Activated CD4-positive, alpha-beta T cell treated with anti-CD3 and anti-CD28 coated beads for 36 hours (primary cell): ENCODE measurements at regions of chr5 and their contacts with region 1.

Region 1: DNA sequence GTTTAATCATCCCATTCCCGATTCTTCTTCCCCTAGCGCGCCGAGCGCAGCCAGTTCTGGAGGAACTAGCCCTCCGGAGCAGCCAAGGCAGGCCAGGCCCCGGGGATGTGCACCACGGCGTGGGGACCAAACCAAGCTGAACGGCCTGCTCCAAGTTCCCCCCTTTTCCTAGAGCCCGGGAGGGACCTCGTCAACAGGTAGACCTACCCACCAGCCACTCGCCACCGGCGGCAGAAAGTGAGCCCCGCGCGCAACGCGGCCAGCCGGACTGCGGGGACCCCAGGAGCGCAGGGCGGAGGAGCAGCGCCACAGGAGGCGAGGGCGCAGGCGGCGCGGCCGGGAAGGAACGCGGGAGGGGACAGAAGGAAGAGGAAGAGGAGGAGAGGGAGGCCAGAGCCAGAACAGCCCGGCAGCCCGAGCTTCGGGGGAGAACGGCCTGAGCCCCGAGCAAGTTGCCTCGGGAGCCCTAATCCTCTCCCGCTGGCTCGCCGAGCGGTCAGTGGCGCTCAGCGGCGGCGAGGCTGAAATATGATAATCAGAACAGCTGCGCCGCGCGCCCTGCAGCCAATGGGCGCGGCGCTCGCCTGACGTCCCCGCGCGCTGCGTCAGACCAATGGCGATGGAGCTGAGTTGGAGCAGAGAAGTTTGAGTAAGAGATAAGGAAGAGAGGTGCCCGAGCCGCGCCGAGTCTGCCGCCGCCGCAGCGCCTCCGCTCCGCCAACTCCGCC is at the start of gene ISL1:
- DNase-seq: peak; percentile 42
- ATAC-seq: peak; percentile 44
- H3K4me3 Mint-ChIP-seq: peak within 1 kb of the TSS; percentile 26
- H3K27ac Mint-ChIP-seq: no peak within 1 kb of the TSS
- H3K4me1 Mint-ChIP-seq: peaks cover 5% of the 10 kb centered on the region
- H3K27me3 Mint-ChIP-seq: peaks cover 85% of the 10 kb centered on the region
- total RNA-seq, gene ISL1: not detected

Region 2: GRCh38 chr5:51397996-51398395 is 15.1 kb after region 1 on chr5:
- CTCF ChIA-PET with region 1: no interaction called
- POLR2A ChIA-PET with region 1: no interaction called
- intact Hi-C with region 1: loop called in 1 of 2 experiments (anchors 2 kb)
- DNase-seq: no peak
- ATAC-seq: no peak
- H3K4me3 Mint-ChIP-seq: no peak overlapping the region
- H3K27ac Mint-ChIP-seq: no peak overlapping the region
- H3K4me1 Mint-ChIP-seq: no peaks in the 10 kb centered on the region
- H3K27me3 Mint-ChIP-seq: peaks cover 56% of the 10 kb centered on the region

Region 3: DNA sequence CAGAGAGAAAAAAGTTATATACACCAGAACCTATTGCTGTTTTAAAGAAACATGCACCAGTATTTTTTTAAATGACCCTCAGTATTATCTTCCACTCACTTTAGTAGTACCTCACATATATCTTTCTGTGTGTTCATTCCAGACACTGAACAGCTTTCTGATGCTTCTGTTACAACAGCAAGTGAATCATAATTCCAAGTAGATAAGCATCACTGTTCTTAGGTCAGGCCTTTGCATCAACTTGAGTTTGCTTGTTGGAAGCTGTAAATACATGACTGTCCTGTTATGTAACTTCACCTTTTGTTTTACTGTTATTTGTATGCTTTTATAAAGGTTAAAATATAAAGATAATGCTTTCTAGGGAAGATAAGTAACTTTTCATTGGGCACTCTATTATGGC is 184.7 kb after region 1 on chr5:
- CTCF ChIA-PET with region 1: no interaction called
- POLR2A ChIA-PET with region 1: no interaction called
- intact Hi-C with region 1: no loop called
- DNase-seq: no peak
- ATAC-seq: no peak
- H3K4me3 Mint-ChIP-seq: no peak overlapping the region
- H3K27ac Mint-ChIP-seq: no peak overlapping the region
- H3K4me1 Mint-ChIP-seq: no peaks in the 10 kb centered on the region
- H3K27me3 Mint-ChIP-seq: no peaks in the 10 kb centered on the region

Region 4: DNA sequence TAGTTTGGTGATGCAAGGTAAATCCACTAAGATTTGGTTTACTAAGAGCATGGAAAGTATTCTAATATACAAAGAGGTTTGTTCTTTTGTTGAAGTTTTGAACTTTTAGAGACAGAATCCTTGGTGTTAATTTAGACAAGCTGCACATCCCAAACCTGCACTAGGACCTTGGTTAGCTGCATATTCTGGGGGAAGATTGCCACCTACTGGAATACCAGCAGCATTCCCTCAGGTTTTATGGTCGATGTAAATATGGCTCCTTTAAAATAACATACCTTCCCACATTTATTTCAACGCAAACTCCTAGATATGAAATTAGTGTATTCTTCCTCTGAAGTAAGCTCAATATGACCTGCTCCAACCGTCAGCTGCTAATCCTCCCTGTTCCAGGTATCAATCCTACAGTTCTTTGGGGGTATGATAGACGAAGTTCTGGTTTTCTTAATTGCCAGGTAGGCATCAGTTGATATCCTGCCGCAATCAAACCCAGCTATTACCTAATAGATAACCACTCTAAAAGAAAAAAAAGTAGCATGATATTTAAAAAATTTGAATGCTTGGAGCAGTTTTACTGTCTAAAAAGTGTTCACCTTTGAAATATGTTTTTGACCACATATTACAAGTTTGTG is 624.4 kb after region 1 on chr5:
- CTCF ChIA-PET with region 1: no interaction called
- POLR2A ChIA-PET with region 1: no interaction called
- intact Hi-C with region 1: loop called in 1 of 2 experiments (anchors 5 kb)
- DNase-seq: no peak
- ATAC-seq: no peak
- H3K4me3 Mint-ChIP-seq: no peak overlapping the region
- H3K27ac Mint-ChIP-seq: no peak overlapping the region
- H3K4me1 Mint-ChIP-seq: no peaks in the 10 kb centered on the region
- H3K27me3 Mint-ChIP-seq: no peaks in the 10 kb centered on the region

Region 5: DNA sequence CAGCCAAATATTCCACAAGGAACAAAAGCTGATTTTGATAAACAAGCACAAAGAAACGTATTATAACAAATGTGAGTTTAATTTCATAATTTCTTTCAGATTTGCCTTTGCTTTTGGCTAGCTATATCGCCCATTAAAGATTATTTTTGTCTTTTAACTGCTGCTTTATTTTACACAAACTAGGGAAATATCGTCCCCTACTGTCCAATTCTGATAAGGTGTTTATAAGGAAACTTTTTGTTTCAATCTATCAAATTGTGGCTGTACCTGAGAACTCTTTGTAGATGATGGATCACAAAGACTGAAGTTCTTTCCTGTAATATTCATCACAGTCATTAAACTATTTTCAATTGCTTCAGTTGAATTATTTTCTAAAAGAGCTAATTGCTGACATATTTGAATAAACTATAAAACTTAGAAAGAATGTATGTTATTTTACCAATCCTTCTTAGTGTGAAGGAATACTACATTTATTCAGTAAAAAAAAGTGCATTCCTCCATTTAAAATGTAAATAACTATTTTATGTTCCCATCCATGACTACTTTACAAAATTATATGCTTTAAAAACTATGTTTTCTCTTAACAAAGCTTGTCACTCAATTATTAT is 973.5 kb after region 1 on chr5:
- CTCF ChIA-PET with region 1: no interaction called
- POLR2A ChIA-PET with region 1: no interaction called
- intact Hi-C with region 1: loop called in 1 of 2 experiments (anchors 2 kb)
- DNase-seq: no peak
- ATAC-seq: no peak
- H3K4me3 Mint-ChIP-seq: no peak overlapping the region
- H3K27ac Mint-ChIP-seq: no peak overlapping the region
- H3K4me1 Mint-ChIP-seq: no peaks in the 10 kb centered on the region
- H3K27me3 Mint-ChIP-seq: no peaks in the 10 kb centered on the region

Region 6: GRCh38 chr5:52657247-52657645 is 1274.3 kb after region 1 on chr5:
- CTCF ChIA-PET with region 1: no interaction called
- POLR2A ChIA-PET with region 1: no interaction called
- intact Hi-C with region 1: loop called in 1 of 2 experiments (anchors 2 kb)
- DNase-seq: no peak
- ATAC-seq: no peak
- H3K4me3 Mint-ChIP-seq: no peak overlapping the region
- H3K27ac Mint-ChIP-seq: no peak overlapping the region
- H3K4me1 Mint-ChIP-seq: no peaks in the 10 kb centered on the region
- H3K27me3 Mint-ChIP-seq: peaks cover 8% of the 10 kb centered on the region